HepG2 (cell line): ENCODE measurements at regions of chrX and their contacts with region 1.

Region 1: DNA sequence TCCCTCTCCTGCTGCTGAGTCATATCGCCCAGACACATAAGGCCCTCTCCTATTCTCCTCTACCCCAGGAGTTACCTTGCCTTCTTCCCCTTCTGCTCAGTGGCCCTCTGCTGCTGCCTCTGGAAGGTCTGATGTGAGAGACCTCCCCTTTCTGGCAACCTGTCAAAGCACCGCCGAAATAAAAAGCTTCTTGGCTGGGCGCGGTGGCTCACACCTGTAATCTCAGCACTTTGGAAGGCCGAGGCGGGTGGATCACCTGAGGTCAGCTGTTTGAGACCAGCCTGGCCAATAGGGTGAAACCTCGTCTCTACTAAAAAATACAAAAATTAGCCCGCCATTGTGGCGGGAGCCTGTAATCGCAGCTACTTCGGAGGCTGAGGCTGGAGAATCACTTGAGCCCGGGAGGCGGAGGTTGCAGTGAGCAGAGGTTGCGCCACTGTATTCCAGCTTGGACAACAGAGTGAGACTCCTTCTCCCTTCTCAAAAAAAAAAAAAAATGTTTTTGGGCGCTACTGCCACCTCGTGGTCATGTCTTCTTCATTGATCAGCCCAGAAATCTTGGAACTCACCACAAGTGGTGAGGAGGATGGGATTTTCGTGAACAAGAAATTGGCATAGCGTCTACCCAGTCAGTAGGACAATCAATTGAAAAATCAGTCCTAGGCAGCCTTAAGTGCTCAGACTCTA is 8.6 kb upstream of the ZXDA start:
- DNase-seq: peak; percentile 5
- ATAC-seq: peak; percentile 57; the same call in 2 of the 3 replicates
- H3K4me3 ChIP-seq: no peak overlapping the region
- H3K27ac ChIP-seq: no peak overlapping the region
- H3K4me1 ChIP-seq: no peaks in the 10 kb centered on the region
- H3K27me3 ChIP-seq: no peaks in the 10 kb centered on the region
- CTCF ChIP-seq: peak; percentile 49
- EP300 ChIP-seq: no peak
- POLR2A ChIP-seq: no peak
- RAD21 ChIP-seq: no peak

Region 2: DNA sequence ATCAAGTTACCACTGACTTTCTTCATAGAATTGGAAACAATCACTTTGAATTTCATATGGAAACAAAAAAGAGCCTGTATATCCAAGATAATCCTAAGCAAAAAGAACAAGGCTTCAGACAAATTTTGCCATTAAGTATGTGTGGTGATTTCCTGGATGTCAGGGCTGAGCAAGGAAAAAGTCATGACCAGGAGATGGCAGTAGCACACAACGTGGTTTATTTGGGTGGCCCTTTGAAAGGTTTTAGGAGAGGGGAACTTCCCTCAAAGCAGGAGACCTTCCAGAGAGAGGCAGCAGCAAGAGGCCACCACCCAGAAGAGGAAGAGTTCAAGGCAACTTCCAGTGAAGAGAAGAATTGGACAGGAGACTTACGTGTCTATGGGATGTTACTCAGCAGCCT is 345.1 kb before region 1 on chrX:
- CTCF ChIA-PET with region 1: no interaction called
- POLR2A ChIA-PET with region 1: no interaction called
- in situ Hi-C with region 1: loop called (anchors 25 kb)
- intact Hi-C with region 1: loop called (anchors 5 kb)
- DNase-seq: no peak
- ATAC-seq: no peak; the same call in 2 of the 3 replicates
- H3K4me3 ChIP-seq: no peak overlapping the region
- H3K27ac ChIP-seq: no peak overlapping the region
- H3K4me1 ChIP-seq: no peaks in the 10 kb centered on the region
- H3K27me3 ChIP-seq: no peaks in the 10 kb centered on the region
- CTCF ChIP-seq: peak; percentile 64
- EP300 ChIP-seq: no peak
- POLR2A ChIP-seq: no peak
- RAD21 ChIP-seq: no peak

Region 3: GRCh38 chrX:57595381-57595811 is 323.5 kb before region 1 on chrX:
- CTCF ChIA-PET with region 1: no interaction called
- POLR2A ChIA-PET with region 1: no interaction called
- in situ Hi-C with region 1: loop called (anchors 25 kb)
- intact Hi-C with region 1: no loop called
- DNase-seq: no peak
- ATAC-seq: no peak
- H3K4me3 ChIP-seq: peak overlapping the region; percentile 39 to 59 (median 50); a peak in 5 of 6 replicates
- H3K27ac ChIP-seq: peak overlapping the region; percentile 61
- H3K4me1 ChIP-seq: peaks cover 38% of the 10 kb centered on the region
- H3K27me3 ChIP-seq: no peaks in the 10 kb centered on the region
- CTCF ChIP-seq: no peak
- EP300 ChIP-seq: no peak; a peak in 1 of 4 replicates
- POLR2A ChIP-seq: no peak
- RAD21 ChIP-seq: no peak

Region 4: GRCh38 chrX:57821703-57822375 is 97.1 kb before region 1 on chrX:
- CTCF ChIA-PET with region 1: no interaction called
- POLR2A ChIA-PET with region 1: no interaction called
- in situ Hi-C with region 1: loop called (anchors 25 kb)
- intact Hi-C with region 1: loop called (anchors 2 kb)
- DNase-seq: peak; percentile 43
- ATAC-seq: peak; percentile 89
- H3K4me3 ChIP-seq: no peak overlapping the region; a peak in 1 of 6 replicates
- H3K27ac ChIP-seq: no peak overlapping the region
- H3K4me1 ChIP-seq: no peaks in the 10 kb centered on the region
- H3K27me3 ChIP-seq: no peaks in the 10 kb centered on the region
- CTCF ChIP-seq: peak; percentile 69
- EP300 ChIP-seq: no peak
- POLR2A ChIP-seq: no peak
- RAD21 ChIP-seq: peak; percentile 40

Region 5: GRCh38 chrX:57933321-57933720 is 14.4 kb after region 1 on chrX:
- CTCF ChIA-PET with region 1: no interaction called
- POLR2A ChIA-PET with region 1: no interaction called
- in situ Hi-C with region 1: no loop called
- intact Hi-C with region 1: no loop called
- DNase-seq: no peak
- ATAC-seq: no peak
- H3K4me3 ChIP-seq: no peak overlapping the region
- H3K27ac ChIP-seq: no peak overlapping the region
- H3K4me1 ChIP-seq: no peaks in the 10 kb centered on the region
- H3K27me3 ChIP-seq: no peaks in the 10 kb centered on the region
- CTCF ChIP-seq: no peak
- EP300 ChIP-seq: no peak
- POLR2A ChIP-seq: no peak
- RAD21 ChIP-seq: no peak

Region 6: DNA sequence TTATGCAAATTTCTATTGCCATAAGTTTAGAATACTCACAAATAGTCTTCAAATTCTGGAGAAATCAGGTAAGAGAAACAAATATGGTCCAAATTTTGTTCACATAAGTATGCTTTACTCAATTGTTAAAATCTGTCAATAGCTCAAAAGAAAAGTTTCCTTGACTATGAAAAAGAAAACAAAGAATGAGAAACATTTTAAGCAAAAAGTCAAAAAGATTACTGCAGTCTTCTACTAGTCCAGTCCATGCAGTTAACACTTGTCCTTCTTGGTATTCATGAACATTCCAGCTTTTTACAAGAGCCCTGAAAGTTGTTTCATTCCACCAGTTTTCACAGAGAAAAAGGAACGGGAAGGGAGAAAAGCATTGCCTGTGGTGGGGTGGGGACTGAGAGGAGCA is 46.1 kb after region 1 on chrX:
- CTCF ChIA-PET with region 1: no interaction called
- POLR2A ChIA-PET with region 1: no interaction called
- in situ Hi-C with region 1: no loop called
- intact Hi-C with region 1: no loop called
- DNase-seq: no peak
- ATAC-seq: no peak
- H3K4me3 ChIP-seq: no peak overlapping the region
- H3K27ac ChIP-seq: no peak overlapping the region
- H3K4me1 ChIP-seq: no peaks in the 10 kb centered on the region
- H3K27me3 ChIP-seq: no peaks in the 10 kb centered on the region
- CTCF ChIP-seq: no peak
- EP300 ChIP-seq: no peak
- POLR2A ChIP-seq: no peak
- RAD21 ChIP-seq: no peak